Calu3 (cell line): ENCODE measurements at regions of chr7 and their contacts with region 1.

Region 1: GRCh38 chr7:30285536-30286284 is 1.3 kb downstream of the ZNRF2 start:
- DNase-seq: peak; percentile 46
- H3K4me3 Mint-ChIP-seq: peak overlapping the region; percentile 86
- H3K27ac Mint-ChIP-seq: peak overlapping the region; percentile 82
- H3K4me1 Mint-ChIP-seq: peaks cover 37% of the 10 kb centered on the region
- H3K27me3 Mint-ChIP-seq: no peaks in the 10 kb centered on the region
- CTCF ChIP-seq: no peak

Region 2: GRCh38 chr7:30348083-30348560 is 62.4 kb after region 1 on chr7:
- CTCF ChIA-PET with region 1: interaction called, 3 read pairs
- intact Hi-C with region 1: loop called (anchors 5 kb)
- DNase-seq: peak; percentile 50
- H3K4me3 Mint-ChIP-seq: no peak overlapping the region
- H3K27ac Mint-ChIP-seq: peak overlapping the region; percentile 44
- H3K4me1 Mint-ChIP-seq: peaks cover 20% of the 10 kb centered on the region
- H3K27me3 Mint-ChIP-seq: no peaks in the 10 kb centered on the region
- CTCF ChIP-seq: no peak